ENCODE measurements at regions of chr12 and their contacts with region 1.

Region 1: DNA sequence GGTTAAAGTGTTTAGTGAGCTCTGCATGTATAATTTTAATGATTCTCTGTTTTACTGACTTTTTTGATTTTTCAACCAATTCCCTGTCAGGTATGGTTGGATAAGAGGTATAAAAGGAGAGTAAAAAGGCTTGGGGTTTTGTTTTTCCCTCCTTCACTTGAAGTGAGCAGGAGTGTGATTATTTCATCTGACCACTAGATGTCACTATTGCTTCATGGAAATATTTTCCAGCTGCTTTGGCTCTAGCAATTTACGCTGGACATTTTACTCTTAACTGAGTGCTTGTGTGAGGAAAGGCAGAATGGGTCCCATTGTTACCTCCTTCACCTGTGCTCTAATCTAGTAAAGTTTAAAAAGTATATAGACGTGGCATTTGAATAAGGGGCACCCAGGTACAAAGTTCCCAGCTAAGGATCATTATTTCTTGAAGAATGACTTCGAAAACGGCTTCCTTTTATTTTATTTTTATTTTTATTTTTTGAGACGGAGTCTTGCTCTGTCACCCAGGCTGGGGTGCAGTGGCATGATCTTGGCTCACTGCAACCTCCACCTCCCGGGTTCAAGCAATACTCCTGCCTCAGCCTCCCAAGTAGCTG is 66.5 kb downstream of the TBC1D30 start:
- DNase-seq: peak; percentile 70
- H3K4me3 Mint-ChIP-seq: no peak overlapping the region
- H3K27ac Mint-ChIP-seq: no peak overlapping the region
- H3K4me1 Mint-ChIP-seq: peaks cover 2% of the 10 kb centered on the region
- H3K27me3 Mint-ChIP-seq: peaks cover 17% of the 10 kb centered on the region

Region 2: GRCh38 chr12:64983771-64984278 is 92.9 kb after region 1 on chr12:
- intact Hi-C with region 1: no loop called
- DNase-seq: no peak
- H3K4me3 Mint-ChIP-seq: no peak overlapping the region
- H3K27ac Mint-ChIP-seq: no peak overlapping the region
- H3K4me1 Mint-ChIP-seq: no peaks in the 10 kb centered on the region
- H3K27me3 Mint-ChIP-seq: no peaks in the 10 kb centered on the region

Region 3: GRCh38 chr12:65121049-65121955 is 230.3 kb after region 1 on chr12 and contains the start of gene WIF1:
- intact Hi-C with region 1: loop called (anchors 1 kb)
- DNase-seq: peak; percentile 71
- H3K4me3 Mint-ChIP-seq: peak within 1 kb of the TSS; percentile 53
- H3K27ac Mint-ChIP-seq: no peak within 1 kb of the TSS
- H3K4me1 Mint-ChIP-seq: peaks cover 4% of the 10 kb centered on the region
- H3K27me3 Mint-ChIP-seq: peaks cover 50% of the 10 kb centered on the region
- total RNA-seq, gene WIF1: not detected in 2 replicates

Region 4: DNA sequence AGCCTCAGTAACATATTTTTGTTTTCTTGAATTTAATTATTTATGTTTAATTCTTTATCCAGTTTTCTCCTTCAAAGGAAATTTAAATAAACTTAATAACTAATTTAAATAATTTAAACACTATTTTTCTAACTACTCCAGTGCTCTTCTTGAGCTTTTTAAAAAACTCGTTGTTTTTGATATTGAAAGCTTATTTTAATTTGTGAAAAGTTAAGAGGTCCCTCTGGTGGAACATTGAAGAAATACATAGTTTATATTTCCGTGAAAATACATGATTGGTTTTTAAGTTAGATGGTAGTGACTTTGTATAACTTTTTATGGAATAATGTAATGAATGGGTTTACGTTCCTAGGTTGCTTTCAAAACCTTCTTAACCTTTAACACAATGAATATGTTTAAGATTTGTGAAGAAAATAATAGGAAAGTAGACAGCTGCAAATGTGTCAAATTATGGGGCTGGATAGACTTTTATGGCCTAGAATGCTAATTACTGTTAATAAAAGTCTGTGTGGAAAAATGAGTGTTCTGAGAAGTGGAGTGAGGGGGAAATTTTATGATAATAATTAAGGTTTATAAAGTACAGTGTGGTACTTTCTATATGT is 341.6 kb after region 1 on chr12:
- intact Hi-C with region 1: loop called (anchors 2 kb)
- DNase-seq: no peak
- H3K4me3 Mint-ChIP-seq: no peak overlapping the region
- H3K27ac Mint-ChIP-seq: no peak overlapping the region
- H3K4me1 Mint-ChIP-seq: peaks cover 12% of the 10 kb centered on the region
- H3K27me3 Mint-ChIP-seq: no peaks in the 10 kb centered on the region

Region 5: DNA sequence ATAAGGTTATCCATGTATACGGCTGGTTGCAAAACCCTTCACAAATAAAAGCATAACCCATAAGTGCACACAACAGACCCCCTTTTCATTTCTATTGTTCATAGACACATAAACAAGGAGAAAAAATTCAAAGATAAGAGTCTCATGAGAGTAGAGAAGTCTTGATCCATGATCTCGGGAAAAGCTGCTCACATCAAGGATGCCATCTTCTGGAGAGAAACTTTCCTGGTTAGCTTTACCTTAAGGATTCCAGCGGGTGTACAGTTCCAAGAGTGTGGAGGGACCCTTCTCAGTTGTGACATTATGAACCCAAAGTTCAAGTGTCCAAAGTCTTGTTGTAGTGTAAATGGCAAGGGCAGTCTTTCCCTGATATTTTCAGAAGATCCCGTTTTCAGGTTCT is 1095.1 kb after region 1 on chr12:
- intact Hi-C with region 1: loop called (anchors 2 kb)
- DNase-seq: no peak
- H3K4me3 Mint-ChIP-seq: no peak overlapping the region
- H3K27ac Mint-ChIP-seq: no peak overlapping the region
- H3K4me1 Mint-ChIP-seq: no peaks in the 10 kb centered on the region
- H3K27me3 Mint-ChIP-seq: peaks cover 10% of the 10 kb centered on the region

Region 6: DNA sequence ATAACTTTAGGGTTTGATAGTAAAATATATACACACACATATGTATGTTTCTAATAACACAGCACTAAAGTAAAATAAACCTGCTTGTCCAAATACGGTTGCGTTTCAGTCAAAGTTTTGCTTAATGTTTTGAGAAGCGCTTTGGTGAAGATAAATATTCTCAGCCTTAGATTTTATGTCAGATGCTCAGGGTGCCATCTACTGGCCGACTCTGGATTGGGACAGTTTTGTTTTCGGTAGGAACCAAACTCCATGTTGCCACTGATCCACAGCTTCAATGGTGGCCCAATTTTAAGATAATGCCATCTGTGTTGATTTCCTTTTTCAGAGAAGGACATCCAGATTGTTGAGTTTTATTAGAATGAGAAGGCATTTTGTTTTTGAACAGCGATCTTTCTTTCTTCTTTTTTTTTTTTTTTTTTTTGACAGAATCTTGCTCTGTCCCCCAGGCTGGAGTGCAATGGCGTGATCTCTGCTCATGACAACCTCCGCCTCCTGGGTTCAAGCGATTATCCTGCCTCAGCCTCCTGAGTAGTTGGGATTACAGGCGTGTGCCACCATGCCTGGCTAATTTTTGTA is 1196.5 kb after region 1 on chr12:
- intact Hi-C with region 1: loop called (anchors 2 kb)
- DNase-seq: peak; percentile 83
- H3K4me3 Mint-ChIP-seq: no peak overlapping the region
- H3K27ac Mint-ChIP-seq: no peak overlapping the region
- H3K4me1 Mint-ChIP-seq: no peaks in the 10 kb centered on the region
- H3K27me3 Mint-ChIP-seq: peaks cover 13% of the 10 kb centered on the region

Region 7: DNA sequence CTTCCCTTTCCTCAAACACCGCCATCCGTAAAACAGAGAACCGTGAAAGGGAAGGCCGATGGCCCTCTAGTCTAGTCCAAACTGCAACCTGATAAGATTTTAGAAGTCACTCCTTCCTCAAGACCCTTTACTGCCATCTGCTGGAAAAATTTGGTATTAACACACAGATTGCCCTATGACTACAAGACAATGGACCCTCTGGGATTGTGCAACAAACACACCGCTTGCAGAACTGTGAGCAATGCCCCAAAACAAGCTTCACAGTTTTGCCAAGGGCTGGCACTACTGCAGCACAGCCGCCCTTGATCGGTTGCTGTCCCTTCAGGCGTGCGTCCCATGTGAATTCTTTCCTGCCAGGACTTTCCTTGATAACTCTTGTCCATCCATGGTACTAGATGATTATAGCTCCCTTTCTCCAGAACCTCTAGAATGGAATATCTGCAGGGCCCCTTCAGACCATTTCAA is 1216.5 kb after region 1 on chr12:
- intact Hi-C with region 1: loop called (anchors 1 kb)
- DNase-seq: peak; percentile 92
- H3K4me3 Mint-ChIP-seq: no peak overlapping the region
- H3K27ac Mint-ChIP-seq: no peak overlapping the region
- H3K4me1 Mint-ChIP-seq: peaks cover 8% of the 10 kb centered on the region
- H3K27me3 Mint-ChIP-seq: peaks cover 14% of the 10 kb centered on the region

Region 8: GRCh38 chr12:66693901-66694675 is 1803.1 kb after region 1 on chr12:
- intact Hi-C with region 1: loop called (anchors 10 kb)
- DNase-seq: peak; percentile 78
- H3K4me3 Mint-ChIP-seq: no peak overlapping the region
- H3K27ac Mint-ChIP-seq: no peak overlapping the region
- H3K4me1 Mint-ChIP-seq: no peaks in the 10 kb centered on the region
- H3K27me3 Mint-ChIP-seq: peaks cover 10% of the 10 kb centered on the region

Measured in activated CD4-positive, alpha-beta T cell treated with anti-CD3 and anti-CD28 coated beads, Interleukin-2, amount 10 ng/mL, durations not matched to agents 24 days and 14 days (primary cell).